Activated CD4-positive, alpha-beta memory T cell treated with anti-CD3 and anti-CD28 coated beads for 36 hours (primary cell): ENCODE measurements at regions of chr6 and their contacts with region 1.

Region 1: GRCh38 chr6:118122801-118123200 is 215.7 kb downstream of the SLC35F1 start:
- DNase-seq: no peak
- H3K4me3 Mint-ChIP-seq: no peak overlapping the region
- H3K27ac Mint-ChIP-seq: no peak overlapping the region
- H3K4me1 Mint-ChIP-seq: peaks cover 5% of the 10 kb centered on the region
- H3K27me3 Mint-ChIP-seq: peaks cover 2% of the 10 kb centered on the region

Region 2: GRCh38 chr6:118187568-118188164 is 64.9 kb after region 1 on chr6:
- CTCF ChIA-PET with region 1: no interaction called
- POLR2A ChIA-PET with region 1: no interaction called
- intact Hi-C with region 1: loop called (anchors 1 kb)
- DNase-seq: peak; percentile 39
- H3K4me3 Mint-ChIP-seq: no peak overlapping the region
- H3K27ac Mint-ChIP-seq: peak overlapping the region; percentile 53
- H3K4me1 Mint-ChIP-seq: peaks cover 20% of the 10 kb centered on the region
- H3K27me3 Mint-ChIP-seq: peaks cover 3% of the 10 kb centered on the region